Activated B cell treated with CpG ODN at 0.5 μM for 24 hours (primary cell): ENCODE measurements at regions of chr10 and their contacts with region 1.

Region 1: GRCh38 chr10:3935141-3935540 is 150.1 kb upstream of the KLF6 start:
- DNase-seq: peak; percentile 31
- ATAC-seq: peak; percentile 98
- H3K4me3 Mint-ChIP-seq: peak overlapping the region; percentile 67
- H3K27ac Mint-ChIP-seq: peak overlapping the region; percentile 88
- H3K4me1 Mint-ChIP-seq: peaks cover 31% of the 10 kb centered on the region
- H3K27me3 Mint-ChIP-seq: no peaks in the 10 kb centered on the region
- CTCF ChIP-seq: no peak

Region 2: DNA sequence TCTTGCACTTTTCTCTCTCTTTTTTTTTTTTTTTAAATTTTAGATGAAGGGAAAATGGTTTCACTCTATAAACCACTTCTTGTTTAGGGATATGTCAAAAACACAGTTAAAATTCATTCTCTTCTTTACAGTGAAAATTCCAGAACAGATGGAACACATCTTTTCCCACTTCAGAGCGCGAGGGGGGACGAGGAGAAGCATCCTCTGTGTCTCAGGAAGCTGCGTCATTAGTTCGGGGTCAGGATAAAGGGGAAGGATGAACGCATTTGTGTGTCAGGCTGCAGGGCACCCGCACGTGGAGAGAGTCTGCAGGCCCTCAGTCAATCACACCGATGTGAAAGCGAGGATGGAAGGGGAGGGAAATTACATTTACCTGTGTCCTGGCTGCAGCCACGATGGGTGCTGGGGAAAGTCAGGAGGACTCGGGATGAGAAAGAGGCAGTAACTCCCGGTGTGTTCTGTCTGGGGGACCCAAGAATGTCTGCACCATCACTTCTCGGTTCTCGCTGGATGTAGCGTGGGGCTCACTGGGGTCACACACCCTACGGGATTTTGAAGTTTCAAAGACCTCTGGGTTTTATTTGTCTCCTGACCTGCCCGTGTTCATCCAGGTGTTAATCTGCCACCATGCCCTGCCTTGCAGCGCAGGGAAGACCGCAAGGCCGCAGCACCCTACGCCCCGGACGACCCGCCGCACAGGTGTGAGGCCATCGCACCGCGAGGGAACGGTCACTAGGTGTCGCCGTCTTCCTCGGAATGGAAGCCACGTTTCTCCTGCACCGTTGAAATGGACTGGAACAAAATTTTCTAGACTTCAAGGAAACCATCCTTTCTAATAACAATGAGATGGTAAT is 695.8 kb before region 1 on chr10:
- CTCF ChIA-PET with region 1: no interaction called
- POLR2A ChIA-PET with region 1: no interaction called
- intact Hi-C with region 1: loop called (anchors 5 kb)
- DNase-seq: peak; percentile 66
- ATAC-seq: peak; percentile 85
- H3K4me3 Mint-ChIP-seq: no peak overlapping the region
- H3K27ac Mint-ChIP-seq: no peak overlapping the region
- H3K4me1 Mint-ChIP-seq: peaks cover 5% of the 10 kb centered on the region
- H3K27me3 Mint-ChIP-seq: peaks cover 6% of the 10 kb centered on the region
- CTCF ChIP-seq: no peak

Region 3: GRCh38 chr10:3805791-3806461 is 129.2 kb before region 1 on chr10:
- CTCF ChIA-PET with region 1: no interaction called
- POLR2A ChIA-PET with region 1: no interaction called
- intact Hi-C with region 1: loop called (anchors 1 kb)
- DNase-seq: peak; percentile 47
- ATAC-seq: peak; percentile 69
- H3K4me3 Mint-ChIP-seq: peak overlapping the region; percentile 73
- H3K27ac Mint-ChIP-seq: peak overlapping the region; percentile 92
- H3K4me1 Mint-ChIP-seq: peaks cover 69% of the 10 kb centered on the region
- H3K27me3 Mint-ChIP-seq: no peaks in the 10 kb centered on the region
- CTCF ChIP-seq: no peak

Region 4: GRCh38 chr10:3902054-3902808 is 32.9 kb before region 1 on chr10:
- CTCF ChIA-PET with region 1: interaction called, 4 read pairs
- POLR2A ChIA-PET with region 1: interaction called, 3 read pairs
- intact Hi-C with region 1: loop called (anchors 1 kb)
- DNase-seq: peak; percentile 30
- ATAC-seq: peak; percentile 87
- H3K4me3 Mint-ChIP-seq: peak overlapping the region; percentile 58
- H3K27ac Mint-ChIP-seq: peak overlapping the region; percentile 87
- H3K4me1 Mint-ChIP-seq: peaks cover 54% of the 10 kb centered on the region
- H3K27me3 Mint-ChIP-seq: no peaks in the 10 kb centered on the region
- CTCF ChIP-seq: no peak

Region 5: DNA sequence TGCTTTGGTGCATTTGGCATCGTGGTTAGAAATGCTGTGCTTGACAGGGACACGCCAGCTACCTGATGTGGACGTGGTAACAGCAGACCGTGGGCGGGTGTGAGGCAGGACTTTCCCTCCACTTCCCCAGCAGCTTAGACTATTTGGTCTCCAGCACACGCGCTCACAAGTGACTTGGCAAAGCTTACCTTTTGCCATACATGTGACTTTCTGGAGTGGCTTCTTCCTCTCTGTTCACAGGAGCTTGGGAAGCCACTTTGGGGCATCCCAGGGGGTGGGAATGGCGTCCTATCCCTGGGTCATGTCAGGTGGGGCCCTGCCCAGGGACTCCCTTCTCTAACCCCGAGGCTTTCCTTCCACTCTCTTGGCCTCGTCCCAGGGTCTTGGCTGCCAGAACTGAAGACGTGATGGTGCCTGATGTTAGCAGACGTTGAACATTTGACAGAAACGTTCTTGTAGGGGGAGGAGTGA is 78.5 kb after region 1 on chr10:
- CTCF ChIA-PET with region 1: no interaction called
- POLR2A ChIA-PET with region 1: no interaction called
- intact Hi-C with region 1: loop called (anchors 5 kb)
- DNase-seq: peak; percentile 32
- ATAC-seq: peak; percentile 81
- H3K4me3 Mint-ChIP-seq: peak overlapping the region; percentile 53
- H3K27ac Mint-ChIP-seq: peak overlapping the region; percentile 83
- H3K4me1 Mint-ChIP-seq: peaks cover 33% of the 10 kb centered on the region
- H3K27me3 Mint-ChIP-seq: no peaks in the 10 kb centered on the region
- CTCF ChIP-seq: no peak

Region 6: GRCh38 chr10:4051011-4051640 is 116.0 kb after region 1 on chr10:
- CTCF ChIA-PET with region 1: no interaction called
- POLR2A ChIA-PET with region 1: no interaction called
- intact Hi-C with region 1: loop called (anchors 5 kb)
- DNase-seq: no peak
- ATAC-seq: no peak
- H3K4me3 Mint-ChIP-seq: peak overlapping the region; percentile 78
- H3K27ac Mint-ChIP-seq: peak overlapping the region; percentile 79
- H3K4me1 Mint-ChIP-seq: peaks cover 36% of the 10 kb centered on the region
- H3K27me3 Mint-ChIP-seq: no peaks in the 10 kb centered on the region
- CTCF ChIP-seq: no peak

Region 7: GRCh38 chr10:4333459-4333894 is 398.3 kb after region 1 on chr10:
- CTCF ChIA-PET with region 1: no interaction called
- POLR2A ChIA-PET with region 1: no interaction called
- intact Hi-C with region 1: loop called (anchors 1 kb)
- DNase-seq: no peak
- ATAC-seq: peak; percentile 28
- H3K4me3 Mint-ChIP-seq: no peak overlapping the region
- H3K27ac Mint-ChIP-seq: no peak overlapping the region
- H3K4me1 Mint-ChIP-seq: no peaks in the 10 kb centered on the region
- H3K27me3 Mint-ChIP-seq: no peaks in the 10 kb centered on the region
- CTCF ChIP-seq: no peak